Motor neuron (in vitro differentiated cells): ENCODE measurements at regions of chr20 and their contacts with region 1.

Region 1: DNA sequence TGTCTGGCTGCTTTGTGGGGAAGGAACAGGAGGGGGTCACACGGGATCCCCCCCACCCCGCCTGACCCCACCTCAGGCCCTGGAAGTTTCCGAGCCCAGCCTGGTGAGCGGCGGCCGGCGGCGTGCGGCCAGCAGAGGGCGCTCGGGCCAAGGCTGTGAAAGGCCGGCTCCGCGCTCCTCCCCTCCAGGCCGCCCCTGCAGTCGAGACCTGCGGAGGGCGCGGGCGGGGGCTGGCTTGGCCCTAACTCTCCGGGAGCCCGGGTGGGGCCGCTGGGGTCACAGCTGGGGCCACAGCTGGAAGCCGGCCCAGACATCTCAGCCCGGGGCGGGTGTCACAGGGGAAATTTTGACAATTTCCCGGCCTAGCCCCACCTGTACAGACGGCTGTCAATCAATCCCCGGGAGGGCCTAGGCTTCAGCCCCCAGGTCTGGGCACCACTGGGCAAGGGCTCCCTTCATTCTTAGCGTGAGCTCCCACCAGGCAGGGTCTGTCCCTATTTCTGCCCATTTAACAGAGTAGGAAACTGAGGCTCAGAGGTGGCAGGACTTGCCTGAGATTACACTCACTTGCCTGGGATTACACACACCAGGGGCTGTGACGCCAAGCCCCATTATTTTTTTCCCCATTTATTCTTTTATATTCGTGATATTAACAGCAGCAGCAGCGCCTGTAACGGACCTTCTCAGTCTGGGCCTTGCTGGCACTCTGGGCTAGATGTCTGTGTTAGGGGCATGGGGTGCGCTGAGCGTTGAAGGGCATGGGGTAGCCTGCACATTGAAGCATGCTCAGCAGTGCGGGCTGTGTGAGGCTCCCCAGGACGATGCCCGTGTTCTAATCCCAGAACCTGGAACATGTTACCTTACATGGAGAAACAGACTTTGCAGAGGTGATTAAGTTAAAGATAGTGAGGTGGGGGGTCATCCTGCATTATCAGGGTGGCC is 23.0 kb downstream of the ZBP1 start:
- ATAC-seq: peak; percentile 72 to 93 (median 77)
- H3K4me3 ChIP-seq: no peak overlapping the region
- H3K27ac ChIP-seq: no peak overlapping the region
- H3K4me1 ChIP-seq: peaks cover 3 to 7% of the 10 kb centered on the region in 2 donors

Region 2: GRCh38 chr20:57514273-57514751 is 83.0 kb before region 1 on chr20:
- in situ Hi-C with region 1: loop called in 8 of 9 experiments (anchors 5 to 10 kb)
- ATAC-seq: peak; percentile 49 to 80 (median 72)
- H3K4me3 ChIP-seq: no peak overlapping the region
- H3K27ac ChIP-seq: no peak overlapping the region
- H3K4me1 ChIP-seq: peaks cover 0 to 2% of the 10 kb centered on the region in 2 donors

Region 3: DNA sequence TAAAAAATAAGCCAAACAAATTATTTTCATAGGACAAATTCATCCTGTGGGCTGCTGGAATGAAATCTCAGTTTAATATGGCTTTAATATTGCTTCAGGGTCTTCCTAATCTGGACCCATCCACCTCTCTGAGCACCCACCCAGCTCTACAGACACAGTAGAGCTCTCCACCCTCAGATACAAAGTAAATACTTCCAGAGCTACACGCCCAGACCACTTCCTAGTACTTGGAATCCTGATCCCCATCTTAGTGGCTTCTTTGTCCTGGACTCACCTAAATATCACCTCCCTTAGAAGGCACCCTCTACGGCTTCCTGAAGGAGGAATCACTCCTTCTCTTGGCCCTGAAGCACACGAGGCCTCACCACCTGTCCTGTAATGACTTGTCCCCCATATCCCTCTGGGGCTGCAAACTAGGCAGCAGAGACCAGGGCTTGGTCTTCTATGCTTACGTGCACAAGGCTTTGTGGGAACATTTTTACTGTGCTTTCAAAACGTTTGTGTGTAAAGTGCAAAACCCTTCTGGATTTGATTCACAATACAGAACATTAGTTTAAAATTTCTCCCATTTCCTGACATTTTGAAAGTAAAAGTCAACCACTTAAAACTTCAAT is 74.8 kb before region 1 on chr20:
- in situ Hi-C with region 1: loop called in 6 of 9 experiments (anchors 5 to 10 kb)
- ATAC-seq: no peak
- H3K4me3 ChIP-seq: no peak overlapping the region
- H3K27ac ChIP-seq: no peak overlapping the region
- H3K4me1 ChIP-seq: peaks cover 8 to 21% of the 10 kb centered on the region in 2 donors

Region 4: GRCh38 chr20:58179432-58180099 is 582.3 kb after region 1 on chr20:
- in situ Hi-C with region 1: loop called in 1 of 9 experiments (anchors 10 kb)
- ATAC-seq: peak; percentile 91 to 97 (median 94)
- H3K4me3 ChIP-seq: peak overlapping the region in 1 of 5 donors; percentile 19
- H3K27ac ChIP-seq: no peak overlapping the region
- H3K4me1 ChIP-seq: peaks cover 11 to 20% of the 10 kb centered on the region in 2 donors